Left ventricle myocardium superior (tissue), 1 donor: ENCODE measurements at regions of chr5 and their contacts with region 1.

Region 1: GRCh38 chr5:126780165-126780827 is 3.4 kb downstream of the LMNB1 start:
- DNase-seq: no peak
- ATAC-seq: no peak

Region 2: GRCh38 chr5:125961150-125961549 is 819.1 kb before region 1 on chr5:
- intact Hi-C with region 1: no loop called
- DNase-seq: no peak
- ATAC-seq: no peak

Region 3: GRCh38 chr5:126309860-126310259 is 470.4 kb before region 1 on chr5:
- intact Hi-C with region 1: no loop called
- DNase-seq: no peak
- ATAC-seq: no peak

Region 4: GRCh38 chr5:126354012-126354857 is 426.1 kb before region 1 on chr5:
- intact Hi-C with region 1: no loop called
- DNase-seq: no peak
- ATAC-seq: peak; percentile 83

Region 5: DNA sequence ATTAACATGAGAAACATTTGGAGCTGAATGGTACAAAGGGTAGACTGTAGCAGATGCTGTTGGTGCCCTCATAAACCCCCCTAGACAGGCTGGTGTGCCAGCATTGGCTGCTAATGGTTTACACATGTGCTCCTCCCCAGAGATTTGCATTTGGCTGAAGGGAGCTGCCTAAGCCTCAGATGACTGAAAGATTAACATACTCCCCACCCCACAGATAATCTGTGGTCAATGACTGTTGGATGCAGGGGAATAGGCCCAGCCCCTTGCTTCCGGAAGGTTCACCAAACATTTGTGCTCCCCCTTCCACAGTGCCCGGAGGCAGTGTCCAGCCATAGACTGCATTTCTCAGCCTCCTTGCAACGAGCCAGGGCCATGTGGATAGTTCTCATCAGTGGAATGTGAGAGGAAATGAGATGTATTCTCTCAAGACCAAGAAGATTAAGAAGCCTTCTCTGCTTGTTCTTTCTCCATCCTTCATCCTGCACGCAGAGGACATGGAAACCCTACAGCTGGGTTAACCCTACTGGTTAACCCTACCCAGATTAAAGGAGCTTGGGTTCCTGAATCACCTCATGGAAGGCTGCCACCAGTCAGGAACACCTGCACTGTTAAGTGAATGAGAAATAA is 100.0 kb before region 1 on chr5:
- intact Hi-C with region 1: loop called (anchors 5 kb)
- DNase-seq: no peak
- ATAC-seq: no peak